Mammary epithelial cell (primary cell): ENCODE measurements at regions of chr13 and their contacts with region 1.

Region 1: GRCh38 chr13:41061075-41061913 is at the start of gene WBP4:
- DNase-seq: peak; percentile 97
- H3K4me3 ChIP-seq: peak within 1 kb of the TSS; percentile 86 to 97 (median 87)
- H3K27ac ChIP-seq: peak within 1 kb of the TSS; percentile 99
- H3K4me1 ChIP-seq: peaks cover 25% of the 10 kb centered on the region
- H3K27me3 ChIP-seq: no peaks in the 10 kb centered on the region
- CTCF ChIP-seq: peak in 1 of 2 donors; percentile 27
- total RNA-seq, gene WBP4: 5.0 to 12.4 TPM

Region 2: GRCh38 chr13:40770934-40771618 is 290.2 kb before region 1 on chr13 and contains the start of gene MRPS31:
- CTCF ChIA-PET with region 1: no interaction called
- dilution Hi-C with region 1: no loop called
- in situ Hi-C with region 1: no loop called
- intact Hi-C with region 1: loop called (anchors 5 kb)
- DNase-seq: peak; percentile 90
- H3K4me3 ChIP-seq: peak within 1 kb of the TSS; percentile 58 to 78 (median 74)
- H3K27ac ChIP-seq: peak within 1 kb of the TSS; percentile 73
- H3K4me1 ChIP-seq: peaks cover 7% of the 10 kb centered on the region
- H3K27me3 ChIP-seq: no peaks in the 10 kb centered on the region
- CTCF ChIP-seq: peak in 1 of 2 donors; percentile 2
- total RNA-seq, gene MRPS31: 15.7 to 17.3 TPM

Region 3: GRCh38 chr13:40922437-40923040 is 138.8 kb before region 1 on chr13:
- CTCF ChIA-PET with region 1: interaction called, 12 read pairs
- dilution Hi-C with region 1: no loop called
- in situ Hi-C with region 1: no loop called
- intact Hi-C with region 1: loop called (anchors 1 kb)
- DNase-seq: no peak
- H3K4me3 ChIP-seq: no peak overlapping the region
- H3K27ac ChIP-seq: no peak overlapping the region
- H3K4me1 ChIP-seq: peaks cover 4% of the 10 kb centered on the region
- H3K27me3 ChIP-seq: no peaks in the 10 kb centered on the region
- CTCF ChIP-seq: no peak

Region 4: DNA sequence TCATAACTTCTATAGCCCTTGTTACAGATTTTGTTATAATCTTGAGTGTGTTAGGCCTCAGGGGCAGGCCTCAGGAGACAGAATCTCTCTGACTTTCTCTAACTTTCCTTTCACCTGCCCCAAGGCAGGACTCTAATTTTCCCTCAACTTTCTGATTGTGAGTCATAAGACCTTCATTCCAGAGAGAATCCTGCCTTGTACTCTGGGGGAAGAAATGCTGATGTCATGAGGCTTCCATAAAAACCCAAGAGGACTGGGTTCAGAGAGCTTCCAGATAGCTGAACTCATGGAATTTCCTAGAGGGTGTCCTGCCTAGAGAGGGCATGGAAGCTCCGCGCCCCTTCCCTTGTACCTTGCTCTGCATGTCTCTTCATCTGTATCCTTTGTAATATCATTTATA is 76.7 kb after region 1 on chr13:
- CTCF ChIA-PET with region 1: interaction called, 4 read pairs
- dilution Hi-C with region 1: no loop called
- in situ Hi-C with region 1: no loop called
- intact Hi-C with region 1: loop called (anchors 1 kb)
- DNase-seq: peak; percentile 96
- H3K4me3 ChIP-seq: no peak overlapping the region
- H3K27ac ChIP-seq: peak overlapping the region; percentile 99
- H3K4me1 ChIP-seq: peaks cover 38% of the 10 kb centered on the region
- H3K27me3 ChIP-seq: no peaks in the 10 kb centered on the region
- CTCF ChIP-seq: no peak

Region 5: GRCh38 chr13:41310963-41311606 is 249.8 kb after region 1 on chr13 and contains the start of gene NAA16:
- CTCF ChIA-PET with region 1: no interaction called
- dilution Hi-C with region 1: no loop called
- in situ Hi-C with region 1: no loop called
- intact Hi-C with region 1: loop called (anchors 5 kb)
- DNase-seq: peak; percentile 86
- H3K4me3 ChIP-seq: peak within 1 kb of the TSS; percentile 66 to 100 (median 94)
- H3K27ac ChIP-seq: peak within 1 kb of the TSS; percentile 86
- H3K4me1 ChIP-seq: peaks cover 24% of the 10 kb centered on the region
- H3K27me3 ChIP-seq: no peaks in the 10 kb centered on the region
- CTCF ChIP-seq: no peak
- total RNA-seq, gene NAA16: 8.7 to 17.8 TPM